Transverse colon (tissue), 4 donors: ENCODE measurements at regions of chr1 and their contacts with region 1.

Region 1: DNA sequence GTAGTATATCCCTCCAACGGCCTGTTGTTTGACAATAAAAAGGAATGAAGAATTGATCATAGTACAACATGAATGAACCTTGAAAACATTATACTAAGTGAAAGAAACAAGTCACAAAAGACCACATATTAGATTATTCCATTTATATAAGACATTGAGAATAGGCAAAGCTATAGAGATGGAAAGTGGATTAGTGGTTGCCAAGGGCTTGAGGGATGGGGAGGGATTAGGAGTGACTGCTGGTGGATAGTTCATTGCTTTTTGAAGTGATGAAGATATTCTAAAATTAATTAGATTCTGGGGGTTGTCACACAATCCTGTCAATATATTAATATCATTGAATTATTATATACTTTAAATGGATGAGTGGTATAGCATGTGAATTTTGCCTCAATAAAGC is 142.5 kb upstream of the DPT start:
- DNase-seq: no peak
- H3K4me3 ChIP-seq: no peak overlapping the region
- H3K27ac ChIP-seq: no peak overlapping the region
- H3K4me1 ChIP-seq: no peaks in the 10 kb centered on the region
- H3K27me3 ChIP-seq: no peaks in the 10 kb centered on the region
- CTCF ChIP-seq: no peak
- EP300 ChIP-seq: no peak
- POLR2A ChIP-seq: no peak

Region 2: DNA sequence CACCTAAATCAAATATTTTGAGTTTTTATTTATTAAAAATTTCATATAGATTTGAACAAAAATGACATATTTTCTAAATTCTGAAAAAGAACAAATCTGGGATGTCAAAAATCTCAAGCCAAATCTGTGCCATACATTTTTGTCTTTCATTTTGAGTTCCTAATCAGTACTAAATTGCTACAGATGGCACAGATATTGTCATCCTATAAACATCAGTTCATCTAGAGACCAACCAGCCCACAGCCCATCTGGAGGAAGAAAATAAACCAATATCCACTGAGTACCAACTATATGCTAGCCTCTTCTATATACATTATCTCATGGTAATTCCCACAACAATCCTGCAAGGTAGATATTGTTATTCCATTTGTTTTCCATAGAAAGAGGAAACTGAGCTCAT is 78.1 kb after region 1 on chr1:
- in situ Hi-C with region 1: no loop called
- intact Hi-C with region 1: no loop called
- DNase-seq: no peak
- H3K4me3 ChIP-seq: no peak overlapping the region
- H3K27ac ChIP-seq: no peak overlapping the region
- H3K4me1 ChIP-seq: peaks cover 9 to 14% (median 11%) of the 10 kb centered on the region in 4 donors
- H3K27me3 ChIP-seq: no peaks in the 10 kb centered on the region
- CTCF ChIP-seq: no peak
- EP300 ChIP-seq: no peak
- POLR2A ChIP-seq: no peak

Region 3: DNA sequence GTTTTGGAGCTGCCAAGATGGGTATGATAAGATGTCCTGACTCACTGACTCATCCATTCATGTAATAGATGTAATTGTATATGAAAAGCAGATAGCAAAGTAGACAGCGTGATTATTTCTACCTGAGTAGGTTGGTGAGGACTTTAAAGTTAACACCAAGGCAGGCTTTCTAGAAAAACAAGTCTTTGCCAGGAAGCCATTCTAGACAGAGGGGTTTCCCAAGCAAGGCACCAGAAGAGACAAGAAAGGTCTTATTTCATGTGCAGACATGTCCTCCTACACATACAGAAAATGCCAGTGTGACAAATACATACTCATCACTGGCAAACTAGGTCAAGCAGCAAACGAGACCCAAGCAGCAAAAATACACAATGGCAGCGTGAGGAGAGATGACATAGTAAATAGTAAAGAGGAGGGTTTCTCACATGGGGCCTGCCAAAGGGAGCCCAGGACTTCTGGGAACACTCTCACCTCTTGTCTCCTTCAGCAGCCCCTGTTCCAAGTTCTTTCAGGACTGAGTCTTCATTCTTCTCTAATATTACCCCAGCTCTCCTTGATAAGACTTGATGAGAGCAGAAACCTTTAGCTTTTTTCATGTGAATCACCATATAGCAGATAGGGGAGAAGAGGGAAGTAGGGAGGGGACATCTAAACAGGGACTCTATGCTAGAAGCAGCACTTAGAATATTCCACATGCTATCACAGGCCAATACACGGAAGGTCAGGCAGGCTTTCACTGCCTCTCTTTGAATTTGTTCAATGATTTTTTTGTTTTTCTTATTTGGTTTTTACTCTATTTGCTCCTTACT is 120.3 kb after region 1 on chr1:
- in situ Hi-C with region 1: no loop called
- intact Hi-C with region 1: no loop called
- DNase-seq: no peak
- H3K4me3 ChIP-seq: no peak overlapping the region
- H3K27ac ChIP-seq: no peak overlapping the region
- H3K4me1 ChIP-seq: no peaks in the 10 kb centered on the region
- H3K27me3 ChIP-seq: no peaks in the 10 kb centered on the region
- CTCF ChIP-seq: no peak
- EP300 ChIP-seq: no peak
- POLR2A ChIP-seq: no peak

Region 4: GRCh38 chr1:169288011-169288414 is 416.5 kb after region 1 on chr1:
- in situ Hi-C with region 1: no loop called
- intact Hi-C with region 1: no loop called
- DNase-seq: no peak
- H3K4me3 ChIP-seq: no peak overlapping the region
- H3K27ac ChIP-seq: no peak overlapping the region
- H3K4me1 ChIP-seq: no peaks in the 10 kb centered on the region
- H3K27me3 ChIP-seq: no peaks in the 10 kb centered on the region
- CTCF ChIP-seq: no peak
- EP300 ChIP-seq: no peak
- POLR2A ChIP-seq: no peak

Region 5: DNA sequence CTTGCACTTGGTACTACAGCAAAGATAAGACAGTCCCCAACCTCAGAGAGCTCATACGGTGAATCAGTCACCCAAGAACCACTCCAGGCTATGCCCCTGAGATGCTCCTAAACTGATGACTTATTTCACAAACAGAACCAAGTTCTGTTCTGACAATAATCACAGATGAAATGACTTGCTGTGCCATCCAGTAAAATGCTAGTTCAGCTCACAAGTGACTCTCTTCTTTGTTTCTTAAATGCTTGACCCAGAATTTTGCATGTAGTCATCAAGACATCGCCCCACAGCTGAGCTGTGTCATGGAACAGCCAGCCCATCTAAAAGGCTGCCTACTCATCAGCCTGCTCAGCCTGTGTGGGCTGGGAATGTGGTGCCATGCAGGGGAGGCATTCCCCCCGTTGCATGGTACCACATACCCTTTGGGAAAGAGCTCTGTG is 620.3 kb after region 1 on chr1:
- in situ Hi-C with region 1: no loop called
- intact Hi-C with region 1: loop called (anchors 5 kb)
- DNase-seq: no peak
- H3K4me3 ChIP-seq: no peak overlapping the region
- H3K27ac ChIP-seq: no peak overlapping the region
- H3K4me1 ChIP-seq: peaks cover 0 to 9% (median 5%) of the 10 kb centered on the region in 4 donors
- H3K27me3 ChIP-seq: no peaks in the 10 kb centered on the region
- CTCF ChIP-seq: no peak
- EP300 ChIP-seq: no peak
- POLR2A ChIP-seq: no peak